B cell (primary cell): ENCODE measurements at regions of chr5 and their contacts with region 1.

Region 1: GRCh38 chr5:138641547-138642298 is 66.5 kb upstream of the HSPA9 start:
- DNase-seq: peak; percentile 57
- ATAC-seq: peak; percentile 43
- H3K4me3 ChIP-seq: no peak overlapping the region
- H3K4me3 Mint-ChIP-seq: no peak overlapping the region
- H3K27ac ChIP-seq: no peak overlapping the region
- H3K27ac Mint-ChIP-seq: no peak overlapping the region
- H3K4me1 ChIP-seq: peaks cover 0 to 2% of the 10 kb centered on the region in 2 donors
- H3K4me1 Mint-ChIP-seq: peaks cover 2% of the 10 kb centered on the region
- H3K27me3 ChIP-seq: peaks cover 0 to 27% (median 4%) of the 10 kb centered on the region in 4 experiments
- H3K27me3 Mint-ChIP-seq: peaks cover 11% of the 10 kb centered on the region
- CTCF ChIP-seq: peak; percentile 54

Region 2: GRCh38 chr5:139262742-139263445 is 621.2 kb after region 1 on chr5:
- CTCF ChIA-PET with region 1: interaction called, 3 read pairs
- POLR2A ChIA-PET with region 1: no interaction called
- intact Hi-C with region 1: loop called (anchors 2 kb)
- DNase-seq: peak; percentile 67
- ATAC-seq: peak; percentile 81
- H3K4me3 ChIP-seq: no peak overlapping the region
- H3K4me3 Mint-ChIP-seq: no peak overlapping the region
- H3K27ac ChIP-seq: no peak overlapping the region
- H3K27ac Mint-ChIP-seq: no peak overlapping the region
- H3K4me1 ChIP-seq: peaks cover 0 to 1% of the 10 kb centered on the region in 2 donors
- H3K4me1 Mint-ChIP-seq: peaks cover under 1% of the 10 kb centered on the region
- H3K27me3 ChIP-seq: peaks cover 0 to 6% (median 0%) of the 10 kb centered on the region in 4 experiments
- H3K27me3 Mint-ChIP-seq: peaks cover 20% of the 10 kb centered on the region
- CTCF ChIP-seq: peak; percentile 38